ENCODE measurements at regions of chr1 and their contacts with region 1.

Region 1: DNA sequence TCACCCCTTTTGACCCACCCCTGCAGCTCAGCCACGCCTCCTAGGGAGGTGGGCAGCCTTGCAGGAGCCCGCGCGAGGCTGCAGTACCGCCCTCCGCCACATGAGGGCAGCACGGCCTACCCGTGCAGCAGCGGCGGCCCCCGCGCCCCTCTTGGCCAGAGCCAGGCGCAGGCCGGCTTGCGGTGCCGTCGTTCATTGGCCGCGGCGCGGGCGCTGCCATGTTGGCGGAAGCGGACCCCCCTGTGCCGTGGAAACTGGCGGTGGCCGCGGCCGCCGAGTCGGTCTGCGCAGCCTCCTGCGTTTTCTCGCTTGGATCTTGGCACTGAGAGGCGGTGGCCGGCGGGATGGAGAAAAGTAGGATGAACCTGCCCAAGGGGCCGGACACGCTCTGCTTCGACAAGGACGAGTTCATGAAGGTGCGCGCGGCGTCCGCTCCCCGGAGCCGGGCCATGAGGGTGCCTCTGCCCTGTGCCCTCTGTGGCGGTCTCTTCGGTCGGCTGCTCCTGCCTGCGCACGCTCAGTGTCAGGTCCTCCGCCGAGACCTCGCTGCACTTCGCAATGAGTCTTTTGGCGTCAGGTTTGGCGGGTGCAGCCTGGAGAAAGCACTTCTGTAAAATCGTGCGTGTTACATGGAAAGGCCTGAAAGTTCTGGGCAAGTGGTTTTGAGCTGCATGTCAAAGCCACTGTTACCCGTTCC is at the start of gene COG2:
- DNase-seq: peak; percentile 97
- ATAC-seq: peak; percentile 92
- H3K4me3 Mint-ChIP-seq: peak within 1 kb of the TSS; percentile 96
- H3K27ac Mint-ChIP-seq: peak within 1 kb of the TSS; percentile 88
- H3K4me1 Mint-ChIP-seq: peaks cover 48% of the 10 kb centered on the region
- H3K27me3 Mint-ChIP-seq: peaks cover 13% of the 10 kb centered on the region
- total RNA-seq, gene COG2: 28.1 to 32.0 TPM

Region 2: DNA sequence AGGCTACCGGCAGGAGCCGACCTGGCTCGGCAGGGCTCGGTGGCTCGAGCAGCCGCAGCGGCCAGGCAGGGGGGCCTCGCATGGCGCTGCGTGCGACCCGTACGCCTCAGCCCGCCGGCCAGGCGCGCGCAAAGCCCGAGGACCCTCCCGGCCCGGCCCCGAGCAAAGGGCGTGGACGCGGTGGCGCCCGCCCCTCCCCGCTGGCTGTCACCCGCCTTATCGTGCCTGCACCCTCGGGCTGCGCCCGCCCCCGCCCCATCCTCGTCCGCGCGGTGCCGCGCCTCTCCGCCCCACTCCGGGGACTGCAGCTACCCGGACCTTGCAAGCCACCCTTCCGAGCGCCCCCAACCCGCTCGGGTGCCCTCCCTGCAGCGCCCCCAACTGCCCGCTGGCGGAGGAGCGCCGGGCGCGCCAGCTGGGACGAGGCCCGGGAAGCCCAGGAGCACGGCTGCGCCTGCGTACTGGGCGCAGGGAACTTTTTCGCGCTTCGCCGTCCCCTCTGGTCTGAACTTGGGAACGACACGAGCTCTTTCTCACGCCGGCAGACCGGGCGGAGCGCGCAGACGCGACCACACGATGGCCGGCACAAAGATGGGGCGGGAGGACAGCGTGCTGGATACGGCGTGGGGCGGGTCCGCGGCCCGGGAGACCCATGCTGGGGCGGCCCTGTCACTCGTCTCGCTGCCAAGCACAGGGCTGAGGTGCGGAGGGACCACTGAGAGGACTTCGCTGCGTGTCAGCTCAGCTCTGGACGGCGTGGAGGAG is 1083.7 kb before region 1 on chr1 and contains the start of gene ABCB10:
- CTCF ChIA-PET with region 1: no interaction called
- POLR2A ChIA-PET with region 1: no interaction called
- intact Hi-C with region 1: loop called in 1 of 2 experiments (anchors 1 kb)
- DNase-seq: peak; percentile 94
- ATAC-seq: peak; percentile 83
- H3K4me3 Mint-ChIP-seq: peak within 1 kb of the TSS; percentile 86
- H3K27ac Mint-ChIP-seq: peak within 1 kb of the TSS; percentile 89
- H3K4me1 Mint-ChIP-seq: peaks cover 34% of the 10 kb centered on the region
- H3K27me3 Mint-ChIP-seq: no peaks in the 10 kb centered on the region
- total RNA-seq, gene ABCB10: 18.4 to 30.1 TPM

Region 3: GRCh38 chr1:230713915-230714764 is 71.7 kb after region 1 on chr1 and contains the start of gene AGT:
- CTCF ChIA-PET with region 1: no interaction called
- POLR2A ChIA-PET with region 1: no interaction called
- intact Hi-C with region 1: no loop called
- DNase-seq: no peak
- ATAC-seq: no peak
- H3K4me3 Mint-ChIP-seq: no peak within 1 kb of the TSS
- H3K27ac Mint-ChIP-seq: no peak within 1 kb of the TSS
- H3K4me1 Mint-ChIP-seq: no peaks in the 10 kb centered on the region
- H3K27me3 Mint-ChIP-seq: peaks cover 12% of the 10 kb centered on the region
- total RNA-seq, gene AGT: not detected

Region 4: DNA sequence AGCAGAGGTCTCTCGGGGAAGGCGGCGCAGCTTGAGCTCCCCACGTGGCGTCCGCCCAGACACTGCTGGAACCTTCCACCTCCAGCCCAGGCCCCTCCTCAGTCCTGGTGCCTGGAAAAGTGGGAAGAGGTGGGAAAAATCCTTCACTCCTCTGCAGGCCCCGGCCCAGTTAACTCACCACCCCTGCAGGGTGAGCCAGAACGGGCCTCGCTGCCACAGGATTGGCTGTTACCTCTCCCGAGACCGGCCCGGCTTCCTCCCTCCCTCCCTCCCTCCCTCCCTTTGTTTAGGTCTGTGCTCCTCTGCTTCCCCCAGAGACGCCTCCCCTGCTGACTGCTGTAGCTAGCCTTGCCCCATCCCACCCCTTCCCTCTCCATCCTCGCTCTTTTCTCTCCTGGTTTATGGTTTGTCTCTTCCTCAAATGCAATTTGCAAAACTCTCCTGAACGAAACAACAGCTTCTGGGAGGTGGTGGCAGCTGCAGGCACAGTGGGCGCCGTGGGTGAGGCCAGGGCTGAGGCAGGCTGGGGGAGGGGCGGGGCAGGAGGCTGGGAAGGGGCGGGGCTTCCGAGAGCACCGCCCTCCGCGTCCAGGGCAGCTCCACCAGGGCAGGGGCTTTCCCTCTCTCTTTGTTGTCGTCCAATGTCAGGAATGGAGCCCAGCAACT is 111.3 kb after region 1 on chr1:
- CTCF ChIA-PET with region 1: interaction called, 4 read pairs
- POLR2A ChIA-PET with region 1: no interaction called
- intact Hi-C with region 1: loop called in 1 of 2 experiments (anchors 1 kb)
- DNase-seq: peak; percentile 79
- ATAC-seq: peak; percentile 93
- H3K4me3 Mint-ChIP-seq: peak overlapping the region; percentile 49
- H3K27ac Mint-ChIP-seq: no peak overlapping the region
- H3K4me1 Mint-ChIP-seq: peaks cover 7% of the 10 kb centered on the region
- H3K27me3 Mint-ChIP-seq: peaks cover 2% of the 10 kb centered on the region

Region 5: GRCh38 chr1:230905733-230906132 is 263.3 kb after region 1 on chr1:
- CTCF ChIA-PET with region 1: no interaction called
- POLR2A ChIA-PET with region 1: no interaction called
- intact Hi-C with region 1: no loop called
- DNase-seq: no peak
- ATAC-seq: no peak
- H3K4me3 Mint-ChIP-seq: no peak overlapping the region
- H3K27ac Mint-ChIP-seq: peak overlapping the region; percentile 62
- H3K4me1 Mint-ChIP-seq: peaks cover 3% of the 10 kb centered on the region
- H3K27me3 Mint-ChIP-seq: no peaks in the 10 kb centered on the region

Region 6: GRCh38 chr1:230978491-230979388 is 336.3 kb after region 1 on chr1 and contains the starts of genes ARV1 and TTC13:
- CTCF ChIA-PET with region 1: interaction called, 4 read pairs
- POLR2A ChIA-PET with region 1: no interaction called
- intact Hi-C with region 1: loop called (anchors 1 to 2 kb)
- DNase-seq: peak; percentile 99
- ATAC-seq: peak; percentile 97
- H3K4me3 Mint-ChIP-seq: peak within 1 kb of the TSS; percentile 86
- H3K27ac Mint-ChIP-seq: peak within 1 kb of the TSS; percentile 98
- H3K4me1 Mint-ChIP-seq: peaks cover 32% of the 10 kb centered on the region
- H3K27me3 Mint-ChIP-seq: no peaks in the 10 kb centered on the region
- total RNA-seq, gene ARV1: 16.2 to 16.9 TPM
- total RNA-seq, gene TTC13: 13.6 to 16.2 TPM

Region 7: DNA sequence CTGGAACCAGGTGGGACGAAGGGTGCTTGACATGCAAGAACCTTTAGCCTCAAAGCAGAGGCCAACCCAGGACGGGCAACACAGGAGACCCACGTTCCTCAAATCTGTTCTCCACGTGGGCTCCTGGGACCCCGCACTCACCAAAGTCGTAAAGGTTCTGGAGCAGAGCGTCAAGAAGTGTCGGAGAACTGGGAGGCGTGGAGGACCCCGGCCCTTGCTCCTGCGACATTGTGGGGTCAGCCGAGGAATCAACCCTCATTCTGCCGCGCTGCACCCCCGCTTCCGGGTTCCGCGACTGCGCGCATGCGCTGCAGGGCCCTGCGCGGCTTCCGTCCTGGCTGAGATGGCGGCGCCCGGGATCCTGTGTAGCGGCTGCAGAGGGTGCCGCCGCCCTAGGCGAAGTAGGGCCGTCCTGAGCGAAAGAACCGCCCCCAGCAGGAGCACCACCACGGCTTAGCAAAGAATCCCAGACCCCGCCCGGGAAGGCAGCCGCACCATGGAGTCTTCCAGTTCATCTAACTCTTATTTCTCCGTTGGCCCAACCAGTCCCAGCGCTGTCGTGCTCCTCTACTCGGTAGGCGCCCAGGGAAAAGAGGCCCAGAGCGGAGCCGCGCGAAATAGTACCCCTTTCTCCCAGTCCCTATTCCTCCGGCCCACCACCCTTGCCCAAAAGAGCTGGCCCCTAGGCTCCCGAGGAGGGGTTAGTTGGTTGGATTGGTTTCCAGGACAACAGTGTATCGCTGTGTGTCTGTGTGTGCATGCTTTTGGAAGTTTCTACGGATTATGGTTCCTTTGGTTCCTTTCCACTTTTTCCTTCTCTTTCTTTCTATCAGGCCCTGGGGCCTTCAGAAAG is 598.7 kb after region 1 on chr1 and contains the start of gene GNPAT:
- CTCF ChIA-PET with region 1: no interaction called
- POLR2A ChIA-PET with region 1: no interaction called
- intact Hi-C with region 1: loop called in 1 of 2 experiments (anchors 1 kb)
- DNase-seq: peak; percentile 94
- ATAC-seq: peak; percentile 98
- H3K4me3 Mint-ChIP-seq: peak within 1 kb of the TSS; percentile 98
- H3K27ac Mint-ChIP-seq: peak within 1 kb of the TSS; percentile 95
- H3K4me1 Mint-ChIP-seq: peaks cover 58% of the 10 kb centered on the region
- H3K27me3 Mint-ChIP-seq: no peaks in the 10 kb centered on the region
- total RNA-seq, gene GNPAT: 58.0 to 62.0 TPM

Region 8: GRCh38 chr1:231528172-231529029 is 886.0 kb after region 1 on chr1 and contains the start of gene TSNAX:
- CTCF ChIA-PET with region 1: no interaction called
- POLR2A ChIA-PET with region 1: no interaction called
- intact Hi-C with region 1: loop called in 1 of 2 experiments (anchors 1 kb)
- DNase-seq: peak; percentile 94
- ATAC-seq: peak; percentile 93
- H3K4me3 Mint-ChIP-seq: peak within 1 kb of the TSS; percentile 88
- H3K27ac Mint-ChIP-seq: peak within 1 kb of the TSS; percentile 99
- H3K4me1 Mint-ChIP-seq: peaks cover 45% of the 10 kb centered on the region
- H3K27me3 Mint-ChIP-seq: no peaks in the 10 kb centered on the region
- total RNA-seq, gene TSNAX: 36.5 to 46.7 TPM

Measured in activated CD4-positive, alpha-beta T cell treated with anti-CD3 and anti-CD28 coated beads for 36 hours (primary cell).